B cell (primary cell): ENCODE measurements at regions of chr5 and their contacts with region 1.

Region 1: GRCh38 chr5:89313804-89314588 is 431.0 kb upstream of the MEF2C start:
- DNase-seq: peak; percentile 73
- ATAC-seq: peak; percentile 95
- H3K4me3 ChIP-seq: no peak overlapping the region
- H3K4me3 Mint-ChIP-seq: peak overlapping the region; percentile 44
- H3K27ac ChIP-seq: peak overlapping the region; percentile 77 to 94
- H3K27ac Mint-ChIP-seq: peak overlapping the region; percentile 85
- H3K4me1 ChIP-seq: peaks cover 32% of the 10 kb centered on the region in 2 donors
- H3K4me1 Mint-ChIP-seq: peaks cover 44% of the 10 kb centered on the region
- H3K27me3 ChIP-seq: no peaks in the 10 kb centered on the region
- H3K27me3 Mint-ChIP-seq: no peaks in the 10 kb centered on the region
- CTCF ChIP-seq: no peak

Region 2: GRCh38 chr5:88826646-88827585 is 487.1 kb before region 1 on chr5:
- CTCF ChIA-PET with region 1: no interaction called
- POLR2A ChIA-PET with region 1: no interaction called
- intact Hi-C with region 1: loop called (anchors 2 kb)
- DNase-seq: peak; percentile 96
- ATAC-seq: peak; percentile 79
- H3K4me3 ChIP-seq: peak overlapping the region; percentile 3 to 61 (median 35)
- H3K4me3 Mint-ChIP-seq: peak overlapping the region; percentile 78
- H3K27ac ChIP-seq: peak overlapping the region; percentile 92 to 94
- H3K27ac Mint-ChIP-seq: peak overlapping the region; percentile 94
- H3K4me1 ChIP-seq: peaks cover 74 to 94% of the 10 kb centered on the region in 2 donors
- H3K4me1 Mint-ChIP-seq: peaks cover 83% of the 10 kb centered on the region
- H3K27me3 ChIP-seq: no peaks in the 10 kb centered on the region
- H3K27me3 Mint-ChIP-seq: no peaks in the 10 kb centered on the region
- CTCF ChIP-seq: no peak

Region 3: GRCh38 chr5:88889189-88890069 is 424.6 kb before region 1 on chr5:
- CTCF ChIA-PET with region 1: no interaction called
- POLR2A ChIA-PET with region 1: no interaction called
- intact Hi-C with region 1: loop called (anchors 5 kb)
- DNase-seq: peak; percentile 79
- ATAC-seq: peak; percentile 60
- H3K4me3 ChIP-seq: peak overlapping the region; percentile 77 to 93 (median 80)
- H3K4me3 Mint-ChIP-seq: peak overlapping the region; percentile 94
- H3K27ac ChIP-seq: peak overlapping the region; percentile 86 to 90
- H3K27ac Mint-ChIP-seq: peak overlapping the region; percentile 96
- H3K4me1 ChIP-seq: peaks cover 33 to 44% of the 10 kb centered on the region in 2 donors
- H3K4me1 Mint-ChIP-seq: peaks cover 67% of the 10 kb centered on the region
- H3K27me3 ChIP-seq: no peaks in the 10 kb centered on the region
- H3K27me3 Mint-ChIP-seq: no peaks in the 10 kb centered on the region
- CTCF ChIP-seq: no peak

Region 4: GRCh38 chr5:89435347-89435746 is 121.4 kb after region 1 on chr5:
- CTCF ChIA-PET with region 1: interaction called, 5 read pairs
- POLR2A ChIA-PET with region 1: interaction called, 3 read pairs
- intact Hi-C with region 1: loop called (anchors 5 kb)
- DNase-seq: peak; percentile 77
- ATAC-seq: peak; percentile 78
- H3K4me3 ChIP-seq: peak overlapping the region in 4 of 5 experiments; percentile 1 to 45 (median 8)
- H3K4me3 Mint-ChIP-seq: peak overlapping the region; percentile 66
- H3K27ac ChIP-seq: peak overlapping the region; percentile 81 to 89
- H3K27ac Mint-ChIP-seq: peak overlapping the region; percentile 86
- H3K4me1 ChIP-seq: peaks cover 53 to 71% of the 10 kb centered on the region in 2 donors
- H3K4me1 Mint-ChIP-seq: peaks cover 59% of the 10 kb centered on the region
- H3K27me3 ChIP-seq: no peaks in the 10 kb centered on the region
- H3K27me3 Mint-ChIP-seq: no peaks in the 10 kb centered on the region
- CTCF ChIP-seq: no peak